Breast epithelium (tissue), 4 donors: ENCODE measurements at regions of chr5 and their contacts with region 1.

Region 1: GRCh38 chr5:179023528-179024430 is at the start of gene ZNF879:
- DNase-seq: peak; percentile 89
- H3K4me3 ChIP-seq: peak within 1 kb of the TSS; percentile 75 to 86 (median 75)
- H3K27ac ChIP-seq: peak within 1 kb of the TSS; percentile 88 to 92
- H3K4me1 ChIP-seq: no peaks in the 10 kb centered on the region
- H3K27me3 ChIP-seq: no peaks in the 10 kb centered on the region
- CTCF ChIP-seq: no peak
- POLR2A ChIP-seq: no peak
- total RNA-seq, gene ZNF879: 4.8 to 13.8 (median 7.9) TPM

Region 2: GRCh38 chr5:178153573-178154343 is 870.0 kb before region 1 on chr5 and contains the start of gene NHP2:
- intact Hi-C with region 1: loop called (anchors 5 kb)
- DNase-seq: peak; percentile 98
- H3K4me3 ChIP-seq: peak within 1 kb of the TSS; percentile 83 to 95 (median 83)
- H3K27ac ChIP-seq: peak within 1 kb of the TSS; percentile 74 to 86
- H3K4me1 ChIP-seq: peaks cover 0 to 5% of the 10 kb centered on the region in 2 donors
- H3K27me3 ChIP-seq: no peaks in the 10 kb centered on the region
- CTCF ChIP-seq: no peak
- POLR2A ChIP-seq: peak; percentile 20
- total RNA-seq, gene NHP2: 148 to 256 (median 220) TPM

Region 3: DNA sequence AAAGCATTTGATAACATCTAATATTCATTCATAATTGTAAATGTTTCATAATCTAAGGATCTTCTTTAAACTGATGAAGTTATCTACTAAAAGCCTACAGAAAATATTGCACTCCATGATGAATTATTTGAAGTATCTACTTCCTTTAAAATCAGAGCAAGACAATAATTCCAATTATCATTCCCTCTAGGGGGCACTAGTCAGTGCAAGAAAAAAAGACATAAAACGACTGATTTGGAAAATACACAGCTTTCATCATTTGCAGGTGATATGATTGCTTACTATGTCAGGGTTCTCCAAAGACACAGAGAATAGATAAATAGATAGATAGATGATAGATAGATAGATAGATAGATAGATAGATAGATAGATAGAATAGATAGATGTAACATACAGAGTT is 15.1 kb before region 1 on chr5:
- intact Hi-C with region 1: loop called (anchors 2 kb)
- DNase-seq: no peak
- H3K4me3 ChIP-seq: no peak overlapping the region
- H3K27ac ChIP-seq: no peak overlapping the region
- H3K4me1 ChIP-seq: no peaks in the 10 kb centered on the region
- H3K27me3 ChIP-seq: no peaks in the 10 kb centered on the region
- CTCF ChIP-seq: no peak
- POLR2A ChIP-seq: no peak

Region 4: DNA sequence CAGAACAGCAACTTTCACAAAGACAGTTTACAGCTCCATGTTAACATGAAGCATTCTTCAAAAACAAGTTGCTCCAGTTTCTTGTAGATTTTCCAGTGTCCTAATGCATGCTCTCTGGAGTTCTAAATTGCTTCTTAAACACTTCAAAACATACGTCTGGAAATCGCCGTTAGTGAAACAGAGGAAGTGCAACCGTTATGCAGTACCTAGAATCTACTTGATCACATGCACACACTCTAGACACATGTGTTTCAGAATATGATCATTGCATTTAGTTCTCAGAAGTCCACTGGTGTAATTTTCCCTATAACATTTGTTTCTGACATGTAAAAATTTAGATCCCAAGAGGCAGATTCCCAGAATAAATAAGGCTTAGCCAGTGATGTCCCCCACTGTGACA is 485.5 kb after region 1 on chr5:
- intact Hi-C with region 1: no loop called
- DNase-seq: no peak
- H3K4me3 ChIP-seq: no peak overlapping the region
- H3K27ac ChIP-seq: no peak overlapping the region
- H3K4me1 ChIP-seq: no peaks in the 10 kb centered on the region
- H3K27me3 ChIP-seq: no peaks in the 10 kb centered on the region
- CTCF ChIP-seq: no peak
- POLR2A ChIP-seq: no peak